K562 (cell line): ENCODE measurements at regions of chr1 and their contacts with region 1.

Region 1: DNA sequence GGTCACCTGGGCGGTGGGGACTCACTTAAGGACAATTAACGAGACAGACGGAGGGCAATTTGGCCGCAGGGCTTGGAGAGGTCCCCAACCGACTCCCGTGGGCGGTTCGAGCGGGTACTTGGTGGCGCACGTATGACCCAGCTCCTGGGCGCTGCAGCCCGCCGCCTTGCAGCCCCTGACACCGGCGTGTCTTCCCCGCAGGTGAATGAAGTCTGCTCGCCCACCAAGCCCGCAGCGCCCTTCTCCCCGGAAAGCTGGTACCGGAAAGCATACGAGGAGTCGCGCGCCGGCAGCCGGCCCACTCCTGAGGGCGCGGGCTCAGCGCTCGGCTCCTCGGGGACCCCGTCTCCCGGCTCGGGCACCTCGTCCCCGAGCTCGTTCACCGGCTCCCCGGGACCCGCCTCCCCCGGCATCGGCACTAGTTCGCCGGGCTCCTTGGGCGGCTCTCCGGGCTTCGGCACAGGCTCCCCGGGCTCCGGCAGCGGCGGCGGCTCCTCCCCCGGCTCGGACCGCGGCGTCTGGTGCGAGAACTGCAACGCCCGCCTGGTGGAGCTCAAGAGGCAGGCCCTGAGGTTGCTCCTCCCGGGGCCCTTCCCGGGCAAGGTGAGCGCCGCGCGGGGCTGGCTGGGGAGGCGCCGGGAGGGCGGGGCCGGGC is 1.4 kb downstream of the KIF26B start:
- DNase-seq: peak; percentile 89 to 96 (median 96)
- ATAC-seq: peak; percentile 98
- H3K4me3 ChIP-seq: peak overlapping the region; percentile 35
- H3K27ac ChIP-seq: no peak overlapping the region
- H3K4me1 ChIP-seq: peaks cover 12 to 42% of the 10 kb centered on the region in 2 experiments
- H3K27me3 ChIP-seq: peaks cover 30 to 54% of the 10 kb centered on the region in 2 experiments
- CTCF ChIP-seq: peak; percentile 58 to 96 (median 87)
- EP300 ChIP-seq: no peak
- POLR2A ChIP-seq: no peak
- RAD21 ChIP-seq: peak; percentile 80 to 84

Region 2: GRCh38 chr1:245225322-245226202 is 69.4 kb after region 1 on chr1:
- CTCF ChIA-PET with region 1: no interaction called
- POLR2A ChIA-PET with region 1: interaction called, 3 read pairs
- in situ Hi-C with region 1: no loop called
- intact Hi-C with region 1: loop called (anchors 5 kb)
- DNase-seq: no peak
- ATAC-seq: peak; percentile 58
- H3K4me3 ChIP-seq: no peak overlapping the region
- H3K27ac ChIP-seq: no peak overlapping the region
- H3K4me1 ChIP-seq: no peaks in the 10 kb centered on the region
- H3K27me3 ChIP-seq: peaks cover 36 to 72% of the 10 kb centered on the region in 2 experiments
- CTCF ChIP-seq: peak in 1 of 3 experiments; percentile 30; a peak in 1 of 6 replicates
- EP300 ChIP-seq: no peak
- POLR2A ChIP-seq: no peak
- RAD21 ChIP-seq: no peak

Region 3: DNA sequence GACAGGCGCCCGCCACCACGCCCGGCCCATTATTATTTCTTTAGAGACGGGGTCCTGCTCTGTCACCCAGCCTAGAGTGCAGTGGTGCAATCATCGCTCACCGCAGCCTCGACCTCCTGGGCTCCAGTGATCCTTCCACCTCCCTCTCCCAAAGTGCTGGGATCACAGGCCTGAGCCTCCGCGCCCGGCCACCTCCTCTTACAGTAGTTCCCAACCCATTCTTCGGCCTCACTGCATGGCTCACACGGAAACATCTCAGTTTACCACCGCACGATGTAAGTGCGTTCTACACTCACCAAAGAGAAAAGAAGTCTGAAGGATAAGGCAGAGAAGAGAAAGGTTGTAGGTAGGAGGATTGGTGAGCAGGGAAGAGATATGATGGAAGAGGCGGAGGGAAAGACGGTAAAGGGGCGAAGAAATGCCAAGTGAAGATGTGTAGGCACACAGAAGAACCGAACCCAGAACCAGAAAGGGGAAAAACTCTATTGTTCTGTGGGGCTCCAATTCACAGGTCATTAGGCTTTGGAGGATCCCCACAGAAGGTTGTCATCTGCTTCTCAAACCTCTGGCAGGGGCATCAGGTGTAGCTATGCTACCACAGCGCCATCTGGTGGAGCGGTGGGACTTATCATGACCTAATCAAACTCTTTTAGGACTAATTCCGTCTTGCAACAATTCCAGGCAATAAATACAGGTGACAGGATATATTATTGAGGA is 846.7 kb after region 1 on chr1:
- CTCF ChIA-PET with region 1: interaction called, 5 read pairs
- POLR2A ChIA-PET with region 1: no interaction called
- in situ Hi-C with region 1: loop called (anchors 5 kb)
- intact Hi-C with region 1: loop called (anchors 1 kb)
- DNase-seq: peak; percentile 80 to 90 (median 82)
- ATAC-seq: peak; percentile 94
- H3K4me3 ChIP-seq: no peak overlapping the region
- H3K27ac ChIP-seq: no peak overlapping the region
- H3K4me1 ChIP-seq: peaks cover under 1 to 3% of the 10 kb centered on the region in 2 experiments; a peak in 3 of 5 replicates
- H3K27me3 ChIP-seq: no peaks in the 10 kb centered on the region
- CTCF ChIP-seq: peak; percentile 87 to 94 (median 89)
- EP300 ChIP-seq: no peak
- POLR2A ChIP-seq: no peak
- RAD21 ChIP-seq: peak; percentile 93 to 97

Region 4: DNA sequence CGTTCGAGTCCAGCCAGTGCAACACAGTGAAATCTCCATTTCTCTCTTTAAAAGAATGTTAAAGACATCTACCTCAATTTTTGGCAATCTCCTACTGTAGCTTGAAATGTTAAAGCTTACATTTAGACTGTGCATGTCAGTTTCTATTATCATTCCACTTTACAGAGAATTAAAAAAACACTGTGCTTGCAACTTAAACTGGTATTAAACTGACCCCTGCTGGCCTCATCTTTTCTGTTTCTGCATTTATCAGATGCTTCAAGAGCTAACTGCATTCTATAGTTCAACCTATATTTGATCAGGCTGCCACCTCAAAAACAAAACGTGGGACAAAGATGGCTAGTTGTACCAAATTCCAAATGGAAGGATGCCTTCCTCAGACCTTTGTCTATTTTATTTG is 1124.3 kb after region 1 on chr1:
- CTCF ChIA-PET with region 1: no interaction called
- POLR2A ChIA-PET with region 1: no interaction called
- in situ Hi-C with region 1: loop called (anchors 10 kb)
- intact Hi-C with region 1: loop called (anchors 10 kb)
- DNase-seq: peak in 1 of 4 experiments; percentile 58
- ATAC-seq: peak; percentile 86
- H3K4me3 ChIP-seq: no peak overlapping the region
- H3K27ac ChIP-seq: no peak overlapping the region
- H3K4me1 ChIP-seq: no peaks in the 10 kb centered on the region; a peak in 3 of 5 replicates
- H3K27me3 ChIP-seq: no peaks in the 10 kb centered on the region
- CTCF ChIP-seq: peak; percentile 36 to 75 (median 59); a peak in 5 of 6 replicates
- EP300 ChIP-seq: no peak
- POLR2A ChIP-seq: no peak
- RAD21 ChIP-seq: peak; percentile 93 to 96

Region 5: DNA sequence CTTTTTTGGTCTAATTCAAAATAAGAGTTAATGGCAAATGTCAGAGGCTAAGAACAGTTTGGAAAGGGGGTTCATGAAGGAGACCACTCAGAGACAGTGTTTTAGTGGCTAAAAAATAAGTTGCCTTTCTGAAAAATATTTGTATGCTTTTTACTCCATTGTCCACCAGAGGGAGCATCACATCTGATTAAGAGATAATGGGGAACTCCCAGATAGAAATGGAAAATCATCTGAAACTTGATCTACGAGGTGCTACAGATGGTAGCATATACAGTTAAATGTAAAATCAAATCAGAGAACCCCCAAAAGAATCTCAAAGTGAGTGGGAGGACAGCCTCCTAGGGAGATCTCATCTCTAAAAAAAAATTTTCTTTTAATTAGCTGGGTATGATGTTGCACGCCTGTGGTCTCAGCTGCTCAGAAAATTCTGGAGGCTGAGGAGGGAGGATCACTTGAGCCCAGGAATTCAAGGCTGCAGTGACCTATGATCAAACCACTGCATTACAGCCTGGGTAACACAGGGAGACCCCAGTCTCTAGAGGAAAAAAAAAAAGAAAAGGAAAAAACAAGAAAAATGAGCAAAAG is 1341.2 kb after region 1 on chr1:
- CTCF ChIA-PET with region 1: interaction called, 4 read pairs
- POLR2A ChIA-PET with region 1: no interaction called
- in situ Hi-C with region 1: no loop called
- intact Hi-C with region 1: loop called (anchors 2 kb)
- DNase-seq: peak; percentile 62 to 84 (median 67)
- ATAC-seq: peak; percentile 45
- H3K4me3 ChIP-seq: no peak overlapping the region
- H3K27ac ChIP-seq: no peak overlapping the region
- H3K4me1 ChIP-seq: peaks cover 0 to 2% of the 10 kb centered on the region in 2 experiments; a peak in 2 of 5 replicates
- H3K27me3 ChIP-seq: no peaks in the 10 kb centered on the region
- CTCF ChIP-seq: peak; percentile 70 to 91 (median 71); a peak in 5 of 6 replicates
- EP300 ChIP-seq: no peak; the same call in 1 of the 2 replicates
- POLR2A ChIP-seq: no peak
- RAD21 ChIP-seq: peak; percentile 84 to 92